PC-3 (cell line): ENCODE measurements at regions of chr14 and their contacts with region 1.

Region 1: GRCh38 chr14:96275177-96276112 is 19.4 kb downstream of the BDKRB1 start:
- DNase-seq: peak; percentile 60
- ATAC-seq: peak; percentile 74
- H3K4me3 ChIP-seq: no peak overlapping the region
- H3K27ac ChIP-seq: no peak overlapping the region
- H3K4me1 ChIP-seq: no peaks in the 10 kb centered on the region
- H3K27me3 ChIP-seq: no peaks in the 10 kb centered on the region
- CTCF ChIP-seq: peak; percentile 93

Region 2: GRCh38 chr14:95993768-95994592 is 281.5 kb before region 1 on chr14:
- CTCF ChIA-PET with region 1: no interaction called
- POLR2A ChIA-PET with region 1: no interaction called
- intact Hi-C with region 1: loop called (anchors 1 kb)
- DNase-seq: peak; percentile 49
- ATAC-seq: no peak
- H3K4me3 ChIP-seq: no peak overlapping the region
- H3K27ac ChIP-seq: no peak overlapping the region
- H3K4me1 ChIP-seq: no peaks in the 10 kb centered on the region
- H3K27me3 ChIP-seq: no peaks in the 10 kb centered on the region
- CTCF ChIP-seq: peak; percentile 80

Region 3: GRCh38 chr14:96792003-96792402 is 516.6 kb after region 1 on chr14:
- CTCF ChIA-PET with region 1: no interaction called
- POLR2A ChIA-PET with region 1: no interaction called
- intact Hi-C with region 1: no loop called
- DNase-seq: peak; percentile 74
- ATAC-seq: peak; percentile 26; the same call in 1 of the 2 replicates
- H3K4me3 ChIP-seq: no peak overlapping the region
- H3K27ac ChIP-seq: no peak overlapping the region
- H3K4me1 ChIP-seq: peaks cover 5% of the 10 kb centered on the region; the same call in 1 of the 2 replicates
- H3K27me3 ChIP-seq: no peaks in the 10 kb centered on the region
- CTCF ChIP-seq: no peak